Breast epithelium (tissue), 4 donors: ENCODE measurements at regions of chrX and their contacts with region 1.

Region 1: DNA sequence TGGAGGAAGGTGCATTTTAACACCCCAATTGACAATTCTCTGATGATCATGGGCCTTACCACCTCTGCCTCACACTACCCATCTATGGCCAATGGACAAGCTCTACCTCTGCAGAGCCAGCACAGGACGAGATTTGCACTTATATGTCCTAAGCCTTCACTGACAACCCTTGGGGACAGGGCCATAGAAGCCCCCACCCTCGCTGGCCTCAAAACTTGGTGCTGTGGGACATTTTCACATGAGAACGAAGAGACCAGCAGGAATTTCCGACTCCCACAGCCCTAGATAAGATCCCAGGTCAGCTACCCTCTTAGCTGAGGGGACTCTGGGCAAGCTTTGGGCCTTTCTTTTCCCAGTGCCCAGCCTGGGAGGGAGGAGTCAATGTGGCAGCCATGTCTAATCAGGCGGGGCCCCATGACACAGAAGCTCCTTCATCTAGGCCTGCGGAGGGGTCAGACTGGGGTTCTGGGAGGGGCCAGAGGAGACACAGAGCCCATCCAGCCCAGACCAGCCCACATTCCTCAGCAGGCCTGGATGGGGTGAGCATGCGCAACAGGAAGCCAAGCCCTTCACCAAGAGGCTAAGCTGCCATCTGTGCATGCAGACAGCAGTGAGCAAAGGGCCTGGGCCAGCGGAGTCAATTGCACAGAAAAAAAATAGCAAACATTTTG is 12.1 kb downstream of the PJA1 start:
- DNase-seq: no peak
- H3K4me3 ChIP-seq: no peak overlapping the region
- H3K27ac ChIP-seq: no peak overlapping the region
- H3K4me1 ChIP-seq: no peaks in the 10 kb centered on the region
- H3K27me3 ChIP-seq: peaks cover 0 to 70% of the 10 kb centered on the region in 2 donors
- CTCF ChIP-seq: no peak
- POLR2A ChIP-seq: no peak

Region 2: DNA sequence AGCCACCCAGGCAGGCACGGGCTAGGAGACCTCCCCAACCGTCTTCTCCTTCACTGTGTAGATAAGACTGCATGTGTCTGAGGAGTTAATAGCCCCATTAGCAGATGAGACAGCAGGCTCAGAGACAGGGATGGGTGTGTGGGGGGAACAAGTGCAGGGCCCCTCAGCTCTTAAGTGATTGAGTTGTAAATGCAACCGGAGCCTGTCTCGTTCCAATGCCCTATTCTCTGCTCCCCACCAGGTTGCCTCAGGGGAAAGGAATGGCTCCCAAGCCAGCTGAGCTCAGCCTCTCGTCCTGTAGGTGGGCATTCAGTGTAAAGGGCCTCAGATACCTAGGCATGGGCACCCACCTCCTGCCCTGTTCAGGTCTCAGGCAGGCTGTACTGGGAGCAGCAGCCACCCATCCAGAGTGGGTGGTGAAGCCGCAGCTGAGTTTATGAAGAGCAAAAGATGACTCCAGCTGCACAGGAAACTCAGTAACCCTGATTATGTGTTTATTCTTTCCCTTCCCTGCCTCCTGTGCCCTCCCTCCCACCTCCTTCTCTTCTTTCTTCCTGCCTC is 75.2 kb before region 1 on chrX:
- intact Hi-C with region 1: no loop called
- DNase-seq: no peak
- H3K4me3 ChIP-seq: no peak overlapping the region
- H3K27ac ChIP-seq: no peak overlapping the region
- H3K4me1 ChIP-seq: no peaks in the 10 kb centered on the region
- H3K27me3 ChIP-seq: peaks cover 0 to 74% of the 10 kb centered on the region in 2 donors
- CTCF ChIP-seq: no peak
- POLR2A ChIP-seq: no peak

Region 3: DNA sequence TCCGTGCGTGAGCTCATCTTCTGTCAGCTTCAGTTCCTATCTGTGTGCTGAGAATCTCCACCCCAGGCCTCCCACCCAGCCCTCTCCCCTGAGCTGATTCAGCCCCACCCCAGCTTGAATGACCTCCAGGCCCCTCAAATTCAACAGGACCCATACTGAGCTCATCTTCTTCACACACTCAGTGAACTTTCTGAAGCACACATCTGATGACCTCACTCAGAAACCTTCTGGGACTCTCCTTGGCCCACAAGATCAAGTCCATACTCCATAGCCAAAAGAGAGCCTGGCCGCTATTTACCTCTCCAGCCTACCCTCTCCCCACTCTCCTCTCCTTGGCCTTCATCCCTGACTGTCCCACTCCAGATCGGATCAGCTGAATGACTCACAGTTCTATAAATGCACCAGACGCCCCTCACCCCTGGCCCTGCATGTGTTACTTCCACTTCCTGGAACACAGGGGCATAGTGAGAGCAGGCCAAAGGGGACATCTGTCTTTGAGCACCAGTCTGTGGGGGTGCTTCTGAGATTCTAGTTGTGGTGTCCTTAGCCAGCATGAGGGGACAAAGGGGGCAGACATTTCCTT is 50.5 kb before region 1 on chrX:
- intact Hi-C with region 1: no loop called
- DNase-seq: no peak
- H3K4me3 ChIP-seq: no peak overlapping the region
- H3K27ac ChIP-seq: no peak overlapping the region
- H3K4me1 ChIP-seq: no peaks in the 10 kb centered on the region
- H3K27me3 ChIP-seq: peaks cover 0 to 80% of the 10 kb centered on the region in 2 donors
- CTCF ChIP-seq: no peak
- POLR2A ChIP-seq: no peak

Region 4: DNA sequence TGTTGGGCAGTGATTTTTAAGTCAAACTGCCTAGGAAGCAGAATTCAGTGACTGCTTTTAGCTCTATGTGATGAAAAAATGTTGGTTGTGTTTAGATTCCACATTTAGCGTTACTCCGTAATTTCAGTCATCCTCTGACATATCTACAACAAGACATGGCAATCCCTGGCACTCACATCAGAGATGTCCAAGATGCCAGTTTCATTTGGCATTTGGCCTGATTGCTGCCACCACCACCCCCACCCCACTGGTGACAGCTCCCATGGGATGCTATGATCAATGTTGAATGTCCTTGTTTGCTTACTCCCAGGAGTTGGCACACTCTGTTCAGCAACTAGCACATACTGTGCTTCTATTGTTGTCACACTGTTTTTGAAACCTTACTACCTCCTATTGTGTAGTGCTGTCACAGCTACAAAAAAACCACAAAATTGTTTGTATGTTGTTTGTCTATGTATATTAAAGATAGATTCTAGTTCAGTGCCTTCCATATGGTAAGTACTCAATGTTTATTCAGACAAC is 795.1 kb after region 1 on chrX:
- intact Hi-C with region 1: loop called (anchors 5 kb)
- DNase-seq: no peak
- H3K4me3 ChIP-seq: no peak overlapping the region
- H3K27ac ChIP-seq: no peak overlapping the region
- H3K4me1 ChIP-seq: no peaks in the 10 kb centered on the region
- H3K27me3 ChIP-seq: peaks cover 0 to 46% of the 10 kb centered on the region in 2 donors
- CTCF ChIP-seq: no peak
- POLR2A ChIP-seq: no peak